Activated CD8-positive, alpha-beta T cell treated with anti-CD3 and anti-CD28 coated beads, Interleukin-2, amount 10 ng/mL, durations not matched to agents 7 days and 5 days (primary cell): ENCODE measurements at regions of chr1 and their contacts with region 1.

Region 1: GRCh38 chr1:29033829-29034466 is 89.8 kb downstream of the TMEM200B start:
- DNase-seq: no peak
- ATAC-seq: peak; percentile 47
- H3K4me3 Mint-ChIP-seq: no peak overlapping the region
- H3K27ac Mint-ChIP-seq: no peak overlapping the region
- H3K4me1 Mint-ChIP-seq: no peaks in the 10 kb centered on the region
- H3K27me3 Mint-ChIP-seq: no peaks in the 10 kb centered on the region

Region 2: DNA sequence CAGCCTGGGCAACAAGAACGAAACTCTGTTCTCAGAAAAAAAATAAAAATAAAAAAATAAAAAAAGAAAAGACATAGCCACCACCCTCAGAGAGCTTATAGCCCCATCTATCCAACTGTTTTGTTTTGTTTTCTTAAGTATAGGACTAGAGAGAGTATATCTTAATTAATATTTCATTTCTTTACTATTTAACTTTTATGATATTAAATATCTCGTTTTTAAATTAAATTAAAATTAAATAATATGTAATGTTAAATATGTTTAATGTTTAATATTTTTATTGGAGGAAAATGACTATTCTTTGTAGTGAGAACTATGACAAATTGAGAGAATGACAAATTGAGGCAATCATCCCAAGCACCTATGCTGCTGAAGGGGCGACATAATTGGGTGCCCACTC is 330.3 kb before region 1 on chr1:
- CTCF ChIA-PET with region 1: no interaction called
- POLR2A ChIA-PET with region 1: no interaction called
- DNase-seq: no peak
- ATAC-seq: no peak
- H3K4me3 Mint-ChIP-seq: no peak overlapping the region
- H3K27ac Mint-ChIP-seq: no peak overlapping the region
- H3K4me1 Mint-ChIP-seq: peaks cover 6% of the 10 kb centered on the region
- H3K27me3 Mint-ChIP-seq: no peaks in the 10 kb centered on the region

Region 3: GRCh38 chr1:28877132-28877781 is 156.7 kb before region 1 on chr1:
- CTCF ChIA-PET with region 1: interaction called, 315 read pairs
- POLR2A ChIA-PET with region 1: interaction called, 4 read pairs
- DNase-seq: peak; percentile 83
- ATAC-seq: peak; percentile 90
- H3K4me3 Mint-ChIP-seq: no peak overlapping the region
- H3K27ac Mint-ChIP-seq: no peak overlapping the region
- H3K4me1 Mint-ChIP-seq: peaks cover 6% of the 10 kb centered on the region
- H3K27me3 Mint-ChIP-seq: peaks cover 7% of the 10 kb centered on the region

Region 4: GRCh38 chr1:28893403-28894102 is 140.4 kb before region 1 on chr1:
- CTCF ChIA-PET with region 1: interaction called, 27 read pairs
- POLR2A ChIA-PET with region 1: interaction called, 3 read pairs
- DNase-seq: no peak
- ATAC-seq: no peak
- H3K4me3 Mint-ChIP-seq: no peak overlapping the region
- H3K27ac Mint-ChIP-seq: peak overlapping the region; percentile 52
- H3K4me1 Mint-ChIP-seq: peaks cover 18% of the 10 kb centered on the region
- H3K27me3 Mint-ChIP-seq: no peaks in the 10 kb centered on the region

Region 5: DNA sequence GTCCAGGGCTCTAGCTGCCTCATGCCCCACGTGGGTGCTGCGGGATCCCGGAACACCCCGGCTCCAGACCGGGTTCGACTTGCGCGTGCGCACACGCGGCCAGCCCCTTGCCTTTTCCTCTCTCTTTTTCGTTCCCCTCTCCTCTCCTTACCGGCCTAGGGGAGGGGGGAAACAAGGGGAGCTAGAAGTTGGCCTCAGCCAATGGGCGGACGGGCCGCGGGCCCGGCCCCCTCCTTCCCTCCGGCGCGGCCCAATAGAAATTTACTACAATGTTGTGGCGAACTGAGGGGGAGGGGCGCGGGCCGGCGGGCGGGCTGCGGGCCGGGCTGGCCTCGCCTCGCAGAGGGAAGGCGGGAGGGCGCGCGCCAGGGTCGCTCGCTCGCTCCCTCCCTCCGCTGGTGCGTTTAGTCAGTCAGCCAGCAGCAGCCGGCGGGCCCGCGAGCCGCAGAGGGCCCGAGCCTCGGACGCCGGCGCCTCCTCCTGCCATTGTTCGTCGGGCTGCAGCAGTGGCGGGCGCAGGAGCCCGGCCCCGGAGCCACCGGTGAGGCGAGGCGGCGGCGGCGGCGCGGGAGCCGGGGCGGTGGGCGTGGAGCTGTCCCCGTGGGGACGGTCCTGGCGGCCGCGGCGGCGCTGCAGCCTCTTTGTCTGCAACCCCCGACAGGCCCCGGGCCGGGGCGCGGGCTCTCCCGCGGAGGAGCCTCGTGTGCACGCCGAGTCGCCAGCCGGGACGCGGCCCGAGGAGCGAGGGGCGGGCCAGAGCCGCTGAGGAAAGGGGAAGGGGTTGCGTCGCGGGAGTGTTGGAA is 119.5 kb before region 1 on chr1 and contains the start of gene EPB41:
- CTCF ChIA-PET with region 1: interaction called, 20 read pairs
- POLR2A ChIA-PET with region 1: interaction called, 3 read pairs
- DNase-seq: peak; percentile 94
- ATAC-seq: peak; percentile 89
- H3K4me3 Mint-ChIP-seq: peak within 1 kb of the TSS; percentile 96
- H3K27ac Mint-ChIP-seq: peak within 1 kb of the TSS; percentile 94
- H3K4me1 Mint-ChIP-seq: peaks cover 41% of the 10 kb centered on the region
- H3K27me3 Mint-ChIP-seq: no peaks in the 10 kb centered on the region
- total RNA-seq, gene EPB41: 94.5 to 95.4 TPM

Region 6: GRCh38 chr1:29017235-29017634 is 16.7 kb before region 1 on chr1:
- CTCF ChIA-PET with region 1: interaction called, 18 read pairs
- POLR2A ChIA-PET with region 1: no interaction called
- DNase-seq: no peak
- ATAC-seq: no peak
- H3K4me3 Mint-ChIP-seq: no peak overlapping the region
- H3K27ac Mint-ChIP-seq: no peak overlapping the region
- H3K4me1 Mint-ChIP-seq: no peaks in the 10 kb centered on the region
- H3K27me3 Mint-ChIP-seq: no peaks in the 10 kb centered on the region

Region 7: DNA sequence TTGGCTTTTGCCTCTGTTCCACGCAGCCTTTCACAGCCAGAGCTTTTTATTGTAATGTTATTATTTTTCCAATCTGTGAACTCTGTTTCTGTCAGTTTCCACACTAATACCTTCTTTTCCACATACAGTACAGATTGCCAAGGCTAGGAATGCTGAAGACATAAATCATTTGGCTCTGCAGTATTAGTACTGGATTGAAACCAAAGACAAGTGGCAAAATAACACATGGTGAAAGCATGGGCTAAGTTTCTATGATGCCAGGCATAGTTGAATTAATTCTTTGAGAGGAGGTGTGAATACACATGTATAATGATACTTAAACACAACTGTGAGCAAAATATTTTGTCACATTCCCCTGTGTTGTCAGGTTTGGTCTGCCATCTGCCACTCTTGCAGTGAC is 16.2 kb after region 1 on chr1:
- CTCF ChIA-PET with region 1: interaction called, 13 read pairs
- POLR2A ChIA-PET with region 1: no interaction called
- DNase-seq: no peak
- ATAC-seq: no peak
- H3K4me3 Mint-ChIP-seq: no peak overlapping the region
- H3K27ac Mint-ChIP-seq: no peak overlapping the region
- H3K4me1 Mint-ChIP-seq: no peaks in the 10 kb centered on the region
- H3K27me3 Mint-ChIP-seq: no peaks in the 10 kb centered on the region

Region 8: GRCh38 chr1:29171089-29171488 is 137.1 kb after region 1 on chr1:
- CTCF ChIA-PET with region 1: no interaction called
- POLR2A ChIA-PET with region 1: no interaction called
- DNase-seq: no peak
- ATAC-seq: no peak
- H3K4me3 Mint-ChIP-seq: peak overlapping the region; percentile 52
- H3K27ac Mint-ChIP-seq: peak overlapping the region; percentile 71
- H3K4me1 Mint-ChIP-seq: peaks cover 64% of the 10 kb centered on the region
- H3K27me3 Mint-ChIP-seq: no peaks in the 10 kb centered on the region

Region 9: GRCh38 chr1:29202584-29203340 is 168.8 kb after region 1 on chr1:
- CTCF ChIA-PET with region 1: interaction called, 51 read pairs
- POLR2A ChIA-PET with region 1: interaction called, 3 read pairs
- DNase-seq: peak; percentile 92
- ATAC-seq: peak; percentile 95
- H3K4me3 Mint-ChIP-seq: no peak overlapping the region
- H3K27ac Mint-ChIP-seq: peak overlapping the region; percentile 36
- H3K4me1 Mint-ChIP-seq: peaks cover 19% of the 10 kb centered on the region
- H3K27me3 Mint-ChIP-seq: no peaks in the 10 kb centered on the region